Endothelial cell of umbilical vein (primary cell): ENCODE measurements at regions of chr17 and their contacts with region 1.

Region 1: GRCh38 chr17:15257258-15257788 is 7.8 kb downstream of the PMP22 start:
- DNase-seq: peak; percentile 70
- H3K4me3 ChIP-seq: peak overlapping the region in 1 of 3 experiments; percentile 12
- H3K27ac ChIP-seq: no peak overlapping the region
- H3K4me1 ChIP-seq: peaks cover 25% of the 10 kb centered on the region
- H3K27me3 ChIP-seq: no peaks in the 10 kb centered on the region
- CTCF ChIP-seq: peak; percentile 87 to 92
- POLR2A ChIP-seq: peak; percentile 62

Region 2: DNA sequence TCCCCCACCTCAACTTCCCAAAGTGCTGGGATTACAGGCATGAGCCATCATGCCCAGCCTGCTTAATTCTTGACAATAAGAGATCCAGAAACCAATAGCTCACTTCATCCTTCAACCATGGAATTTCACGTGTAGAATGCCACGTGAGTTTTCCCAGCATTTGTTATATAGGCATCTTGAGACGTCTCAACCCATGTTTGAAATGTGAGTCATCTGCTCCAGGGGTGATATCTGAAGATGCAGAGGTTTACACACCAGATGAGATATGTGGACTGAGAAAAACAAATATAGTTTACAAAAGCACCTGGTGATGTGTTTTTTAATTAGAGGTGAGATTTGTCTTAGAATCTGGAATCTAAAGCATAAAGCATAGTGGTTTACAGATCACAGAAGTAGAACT is 77.0 kb after region 1 on chr17:
- CTCF ChIA-PET with region 1: no interaction called
- POLR2A ChIA-PET with region 1: no interaction called
- dilution Hi-C with region 1: no loop called
- intact Hi-C with region 1: no loop called
- DNase-seq: no peak
- H3K4me3 ChIP-seq: no peak overlapping the region
- H3K27ac ChIP-seq: no peak overlapping the region
- H3K4me1 ChIP-seq: no peaks in the 10 kb centered on the region
- H3K27me3 ChIP-seq: peaks cover 4 to 7% of the 10 kb centered on the region in 2 experiments
- CTCF ChIP-seq: no peak
- POLR2A ChIP-seq: no peak

Region 3: DNA sequence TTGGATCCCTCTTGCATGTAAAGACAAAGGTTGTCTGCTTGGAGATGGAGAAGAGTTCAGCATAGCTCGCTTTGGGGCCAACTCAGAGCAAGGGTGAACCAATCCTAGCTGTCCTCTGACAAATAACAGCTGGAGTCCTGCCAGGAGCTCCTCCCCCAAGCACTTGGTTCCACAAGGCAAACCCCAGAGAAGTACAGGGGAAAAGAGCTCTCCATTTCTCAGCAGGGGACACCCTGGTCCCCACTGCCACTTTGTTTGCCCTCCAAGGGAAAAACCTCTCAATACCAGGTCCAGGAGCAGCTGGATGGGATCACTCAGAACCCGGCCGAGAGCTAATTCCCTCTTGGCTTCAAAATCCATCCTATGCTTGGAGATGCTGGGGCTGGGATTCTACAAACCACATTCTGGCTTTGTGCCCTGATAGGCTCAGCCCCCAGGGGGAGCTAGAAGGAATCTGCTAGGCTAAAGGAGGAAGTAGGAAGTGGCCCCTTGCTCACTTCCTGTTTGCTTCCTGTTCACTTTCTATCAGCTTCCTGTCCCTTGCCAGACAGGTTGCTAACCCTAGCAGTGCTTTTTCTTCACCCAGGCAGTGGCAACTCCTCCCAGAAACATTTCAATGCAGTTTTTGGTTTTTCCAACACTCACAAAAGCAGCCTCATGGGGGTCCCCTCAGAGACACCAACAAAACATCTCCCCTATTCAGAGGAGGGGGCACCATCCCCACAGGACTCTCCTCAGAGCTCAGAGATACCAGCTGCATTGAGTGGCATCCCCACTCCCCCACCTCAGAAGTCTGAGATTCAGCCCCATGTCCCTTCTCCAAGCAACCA is 179.4 kb after region 1 on chr17:
- CTCF ChIA-PET with region 1: interaction called, 14 read pairs
- POLR2A ChIA-PET with region 1: no interaction called
- dilution Hi-C with region 1: no loop called
- intact Hi-C with region 1: loop called (anchors 2 kb)
- DNase-seq: peak; percentile 32
- H3K4me3 ChIP-seq: no peak overlapping the region
- H3K27ac ChIP-seq: no peak overlapping the region
- H3K4me1 ChIP-seq: peaks cover 23% of the 10 kb centered on the region
- H3K27me3 ChIP-seq: no peaks in the 10 kb centered on the region
- CTCF ChIP-seq: peak; percentile 39 to 47
- POLR2A ChIP-seq: no peak

Region 4: GRCh38 chr17:15456972-15457722 is 199.8 kb after region 1 on chr17:
- CTCF ChIA-PET with region 1: interaction called, 14 read pairs
- POLR2A ChIA-PET with region 1: no interaction called
- dilution Hi-C with region 1: no loop called
- intact Hi-C with region 1: no loop called
- DNase-seq: peak; percentile 62
- H3K4me3 ChIP-seq: no peak overlapping the region
- H3K27ac ChIP-seq: no peak overlapping the region
- H3K4me1 ChIP-seq: peaks cover 12% of the 10 kb centered on the region
- H3K27me3 ChIP-seq: no peaks in the 10 kb centered on the region
- CTCF ChIP-seq: peak in 1 of 2 donors; percentile 22
- POLR2A ChIP-seq: no peak

Region 5: GRCh38 chr17:15651583-15652110 is 394.3 kb after region 1 on chr17:
- CTCF ChIA-PET with region 1: interaction called, 3 read pairs
- POLR2A ChIA-PET with region 1: no interaction called
- dilution Hi-C with region 1: no loop called
- intact Hi-C with region 1: loop called (anchors 2 kb)
- DNase-seq: peak; percentile 98
- H3K4me3 ChIP-seq: peak overlapping the region in 2 of 3 experiments; percentile 57 to 59
- H3K27ac ChIP-seq: peak overlapping the region; percentile 56
- H3K4me1 ChIP-seq: peaks cover 24% of the 10 kb centered on the region
- H3K27me3 ChIP-seq: no peaks in the 10 kb centered on the region
- CTCF ChIP-seq: peak in 1 of 2 donors; percentile 2
- POLR2A ChIP-seq: no peak

Region 6: GRCh38 chr17:15999439-16000350 is 742.4 kb after region 1 on chr17 and contains the starts of genes TTC19 and ZSWIM7:
- CTCF ChIA-PET with region 1: no interaction called
- POLR2A ChIA-PET with region 1: no interaction called
- dilution Hi-C with region 1: no loop called
- intact Hi-C with region 1: loop called (anchors 2 kb)
- DNase-seq: peak; percentile 96
- H3K4me3 ChIP-seq: peak within 1 kb of the TSS; percentile 67 to 96 (median 82)
- H3K27ac ChIP-seq: peak within 1 kb of the TSS; percentile 90
- H3K4me1 ChIP-seq: peaks cover 20% of the 10 kb centered on the region
- H3K27me3 ChIP-seq: no peaks in the 10 kb centered on the region
- CTCF ChIP-seq: no peak
- POLR2A ChIP-seq: peak; percentile 92
- total RNA-seq, gene TTC19: 32.8 and 33.3 TPM in 2 replicates
- total RNA-seq, gene ZSWIM7: 18.0 and 21.9 TPM in 2 replicates